MCF 10A (cell line): ENCODE measurements at regions of chr1 and their contacts with region 1.

Region 1: DNA sequence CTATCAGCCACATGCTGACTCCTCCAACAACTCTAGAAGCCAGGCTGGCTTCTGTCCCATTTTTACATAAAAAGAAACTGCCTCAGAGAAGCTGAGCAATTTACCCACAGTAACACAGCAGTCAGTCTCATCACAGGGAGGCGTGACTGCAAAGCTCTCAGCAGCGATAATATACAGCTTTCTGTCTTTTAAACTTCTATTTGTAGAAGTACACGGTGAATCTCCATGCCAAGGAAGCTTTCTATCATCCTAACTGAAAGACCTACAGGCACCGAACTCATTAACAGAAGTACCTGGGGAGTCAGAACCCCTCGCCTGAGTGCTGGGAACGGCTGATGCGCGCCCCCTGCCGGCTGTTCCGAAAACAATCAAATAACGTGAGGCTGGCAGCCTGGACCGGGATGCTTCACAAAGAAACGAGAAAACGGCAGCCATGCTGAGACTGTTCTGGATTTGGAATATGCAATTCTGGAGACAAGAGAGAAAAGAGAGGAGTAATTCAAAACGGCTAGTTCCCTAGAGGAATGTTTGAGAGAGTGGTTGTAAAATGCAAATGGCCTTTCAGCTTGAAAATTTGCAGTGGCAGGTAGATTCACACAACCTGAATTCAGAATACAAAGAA is 43.5 kb upstream of the RAB4A start:
- DNase-seq: peak; percentile 94
- H3K4me3 Mint-ChIP-seq: peak overlapping the region; percentile 5
- H3K27ac Mint-ChIP-seq: peak overlapping the region; percentile 1
- H3K4me1 Mint-ChIP-seq: peaks cover 66% of the 10 kb centered on the region
- H3K27me3 Mint-ChIP-seq: no peaks in the 10 kb centered on the region
- CTCF ChIP-seq: peak; percentile 99

Region 2: GRCh38 chr1:228691926-228692325 is 535.5 kb before region 1 on chr1:
- CTCF ChIA-PET with region 1: interaction called, 203 read pairs
- POLR2A ChIA-PET with region 1: interaction called, 24 read pairs
- intact Hi-C with region 1: loop called (anchors 1 kb)
- DNase-seq: peak; percentile 84
- H3K4me3 Mint-ChIP-seq: no peak overlapping the region
- H3K27ac Mint-ChIP-seq: no peak overlapping the region
- H3K4me1 Mint-ChIP-seq: peaks cover 18% of the 10 kb centered on the region
- H3K27me3 Mint-ChIP-seq: no peaks in the 10 kb centered on the region
- CTCF ChIP-seq: peak; percentile 85

Region 3: GRCh38 chr1:228837817-228838716 is 389.3 kb before region 1 on chr1:
- CTCF ChIA-PET with region 1: interaction called, 18 read pairs
- POLR2A ChIA-PET with region 1: interaction called, 38 read pairs
- intact Hi-C with region 1: loop called (anchors 10 kb)
- DNase-seq: peak; percentile 100
- H3K4me3 Mint-ChIP-seq: peak overlapping the region; percentile 4
- H3K27ac Mint-ChIP-seq: peak overlapping the region; percentile 78
- H3K4me1 Mint-ChIP-seq: peaks cover 50% of the 10 kb centered on the region
- H3K27me3 Mint-ChIP-seq: peaks cover 42% of the 10 kb centered on the region
- CTCF ChIP-seq: no peak

Region 4: DNA sequence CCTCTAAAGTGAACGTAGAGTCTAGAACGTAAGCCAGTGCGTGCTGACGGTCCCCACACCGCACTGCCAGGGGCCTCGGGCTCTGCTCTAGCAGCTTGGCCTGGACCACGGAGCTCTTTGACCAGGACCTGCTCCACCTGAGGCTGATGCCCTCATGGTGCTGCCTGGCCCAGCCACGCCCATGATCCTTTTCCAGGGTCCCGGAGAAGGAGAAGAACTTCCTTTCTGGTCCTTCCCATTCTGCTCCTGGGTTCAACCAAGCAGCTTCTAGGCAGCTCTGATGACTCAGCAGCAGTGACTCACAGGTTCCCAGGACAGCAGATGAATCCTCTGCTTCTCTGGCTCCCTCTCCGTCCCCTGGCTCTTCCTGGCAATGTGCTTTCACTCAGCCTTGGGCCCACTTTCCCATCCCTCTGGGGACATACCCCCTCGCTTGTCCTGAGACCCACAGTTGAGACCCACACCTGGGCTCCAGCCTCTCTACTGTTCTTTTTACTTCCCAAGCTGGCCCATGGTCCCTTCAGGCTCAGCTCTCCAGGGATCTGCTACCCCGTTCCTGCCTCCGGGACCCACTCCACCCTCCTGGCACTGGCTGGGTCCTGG is 202.8 kb before region 1 on chr1:
- CTCF ChIA-PET with region 1: interaction called, 19 read pairs
- POLR2A ChIA-PET with region 1: interaction called, 4 read pairs
- intact Hi-C with region 1: loop called (anchors 1 kb)
- DNase-seq: peak; percentile 98
- H3K4me3 Mint-ChIP-seq: no peak overlapping the region
- H3K27ac Mint-ChIP-seq: peak overlapping the region; percentile 21
- H3K4me1 Mint-ChIP-seq: peaks cover 25% of the 10 kb centered on the region
- H3K27me3 Mint-ChIP-seq: peaks cover 11% of the 10 kb centered on the region
- CTCF ChIP-seq: no peak

Region 5: GRCh38 chr1:229164836-229165735 is 62.3 kb before region 1 on chr1:
- CTCF ChIA-PET with region 1: interaction called, 30 read pairs
- POLR2A ChIA-PET with region 1: interaction called, 3 read pairs
- intact Hi-C with region 1: loop called (anchors 2 kb)
- DNase-seq: no peak
- H3K4me3 Mint-ChIP-seq: no peak overlapping the region
- H3K27ac Mint-ChIP-seq: no peak overlapping the region
- H3K4me1 Mint-ChIP-seq: no peaks in the 10 kb centered on the region
- H3K27me3 Mint-ChIP-seq: peaks cover 34% of the 10 kb centered on the region
- CTCF ChIP-seq: no peak

Region 6: GRCh38 chr1:229249854-229250644 is 22.6 kb after region 1 on chr1:
- CTCF ChIA-PET with region 1: interaction called, 201 read pairs
- POLR2A ChIA-PET with region 1: interaction called, 126 read pairs
- intact Hi-C with region 1: loop called (anchors 1 kb)
- DNase-seq: no peak
- H3K4me3 Mint-ChIP-seq: no peak overlapping the region
- H3K27ac Mint-ChIP-seq: peak overlapping the region; percentile 4
- H3K4me1 Mint-ChIP-seq: peaks cover 36% of the 10 kb centered on the region
- H3K27me3 Mint-ChIP-seq: no peaks in the 10 kb centered on the region
- CTCF ChIP-seq: no peak

Region 7: DNA sequence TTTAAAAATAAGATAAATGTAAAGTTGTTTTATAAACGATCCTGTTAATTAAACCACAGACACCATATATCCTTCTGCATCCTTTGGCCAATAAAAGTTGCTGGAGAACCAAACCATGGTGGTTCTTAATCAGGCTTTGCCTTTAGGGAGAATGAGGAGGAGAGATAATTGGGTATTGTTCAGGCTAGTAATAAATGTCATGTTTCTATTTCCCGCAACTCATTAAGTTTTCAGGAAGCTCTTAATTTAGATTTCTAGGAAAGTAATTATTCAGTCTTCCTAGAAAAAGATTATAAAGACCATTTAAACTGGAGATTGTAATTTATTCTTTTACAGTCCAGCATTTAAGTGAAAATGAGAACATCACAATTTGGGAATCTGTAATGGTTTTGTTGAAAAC is 78.0 kb after region 1 on chr1:
- CTCF ChIA-PET with region 1: no interaction called
- POLR2A ChIA-PET with region 1: no interaction called
- intact Hi-C with region 1: no loop called
- DNase-seq: no peak
- H3K4me3 Mint-ChIP-seq: no peak overlapping the region
- H3K27ac Mint-ChIP-seq: no peak overlapping the region
- H3K4me1 Mint-ChIP-seq: no peaks in the 10 kb centered on the region
- H3K27me3 Mint-ChIP-seq: no peaks in the 10 kb centered on the region
- CTCF ChIP-seq: no peak

Region 8: DNA sequence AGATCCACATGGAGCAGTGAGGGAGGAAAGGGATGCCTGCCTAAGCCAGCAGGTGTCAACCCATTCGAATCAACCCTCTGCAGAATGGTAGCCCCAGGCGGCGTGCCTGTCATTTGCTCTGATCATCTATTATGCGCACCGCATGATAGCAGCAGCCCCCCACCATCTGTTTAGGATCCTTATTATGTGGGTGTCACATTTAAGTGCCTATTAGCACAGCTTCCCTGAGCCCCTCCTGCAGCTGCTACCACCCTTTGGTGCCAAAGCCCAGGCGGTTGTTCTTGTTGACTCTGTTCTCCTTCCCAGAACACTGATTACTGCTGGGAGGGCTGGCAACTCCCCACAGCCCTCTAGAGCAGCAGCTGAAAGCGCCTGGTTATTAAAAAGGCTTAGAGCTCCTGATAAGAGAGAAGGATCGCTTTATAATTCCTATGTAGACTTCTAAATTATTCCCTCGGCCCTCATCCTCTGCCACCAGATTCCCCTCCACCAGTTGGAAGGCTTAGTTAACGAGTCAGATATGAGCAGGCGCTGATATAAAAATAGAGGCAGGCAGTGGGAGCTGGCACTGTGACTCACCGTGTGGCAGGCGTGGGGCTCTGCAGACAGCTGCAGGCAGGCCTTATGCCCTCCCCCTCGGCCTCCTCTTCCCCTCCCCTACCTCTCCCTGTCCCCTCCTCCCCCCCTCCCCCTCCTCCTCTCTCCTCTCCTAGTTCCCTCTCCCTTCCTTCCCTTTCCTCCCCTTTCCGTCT is 183.5 kb after region 1 on chr1:
- CTCF ChIA-PET with region 1: no interaction called
- POLR2A ChIA-PET with region 1: no interaction called
- intact Hi-C with region 1: no loop called
- DNase-seq: peak; percentile 74
- H3K4me3 Mint-ChIP-seq: no peak overlapping the region
- H3K27ac Mint-ChIP-seq: no peak overlapping the region
- H3K4me1 Mint-ChIP-seq: peaks cover 7% of the 10 kb centered on the region
- H3K27me3 Mint-ChIP-seq: peaks cover 33% of the 10 kb centered on the region
- CTCF ChIP-seq: no peak

Region 9: DNA sequence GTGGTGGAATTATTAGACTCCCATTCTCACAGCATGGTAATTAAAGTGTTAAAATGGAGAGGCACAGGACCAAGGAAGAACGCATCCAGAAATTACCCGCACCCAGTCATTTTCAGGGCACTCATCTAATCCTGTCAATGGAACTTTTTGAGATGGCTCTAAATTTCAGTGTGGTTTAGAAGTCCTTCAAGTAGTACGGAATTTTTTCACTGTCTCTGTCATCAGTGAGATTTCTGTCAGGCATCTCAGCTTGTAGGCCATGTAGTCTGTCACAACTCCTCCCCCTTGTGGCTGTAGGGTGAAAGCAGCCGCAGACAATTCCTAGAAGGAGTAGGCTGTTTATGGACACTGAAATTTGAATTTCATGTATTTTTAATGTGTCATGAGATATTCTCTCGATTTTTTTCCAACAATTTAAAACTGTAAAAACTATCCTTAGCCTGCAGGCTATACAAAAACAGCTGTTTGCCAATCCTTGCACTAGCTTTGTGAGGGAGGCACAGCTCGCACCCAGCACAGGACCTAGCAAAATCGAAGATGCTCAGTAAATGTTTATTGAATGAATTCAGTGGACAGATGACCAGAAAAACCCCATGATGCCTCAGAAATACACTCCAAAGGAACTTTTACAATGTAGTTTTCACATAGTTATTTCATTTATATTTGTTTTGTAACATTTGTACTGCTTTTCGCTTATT is 287.3 kb after region 1 on chr1:
- CTCF ChIA-PET with region 1: interaction called, 11 read pairs
- POLR2A ChIA-PET with region 1: interaction called, 3 read pairs
- intact Hi-C with region 1: no loop called
- DNase-seq: peak; percentile 90
- H3K4me3 Mint-ChIP-seq: no peak overlapping the region
- H3K27ac Mint-ChIP-seq: no peak overlapping the region
- H3K4me1 Mint-ChIP-seq: peaks cover 6% of the 10 kb centered on the region
- H3K27me3 Mint-ChIP-seq: no peaks in the 10 kb centered on the region
- CTCF ChIP-seq: peak; percentile 91

Region 10: GRCh38 chr1:230104395-230105244 is 877.2 kb after region 1 on chr1:
- CTCF ChIA-PET with region 1: no interaction called
- POLR2A ChIA-PET with region 1: no interaction called
- intact Hi-C with region 1: no loop called
- DNase-seq: peak; percentile 100
- H3K4me3 Mint-ChIP-seq: peak overlapping the region; percentile 61
- H3K27ac Mint-ChIP-seq: peak overlapping the region; percentile 65
- H3K4me1 Mint-ChIP-seq: peaks cover 67% of the 10 kb centered on the region
- H3K27me3 Mint-ChIP-seq: no peaks in the 10 kb centered on the region
- CTCF ChIP-seq: peak; percentile 4

Region 11: GRCh38 chr1:230917284-230918135 is 1690.1 kb after region 1 on chr1:
- CTCF ChIA-PET with region 1: no interaction called
- POLR2A ChIA-PET with region 1: no interaction called
- intact Hi-C with region 1: no loop called
- DNase-seq: peak; percentile 93
- H3K4me3 Mint-ChIP-seq: no peak overlapping the region
- H3K27ac Mint-ChIP-seq: no peak overlapping the region
- H3K4me1 Mint-ChIP-seq: peaks cover 6% of the 10 kb centered on the region
- H3K27me3 Mint-ChIP-seq: no peaks in the 10 kb centered on the region
- CTCF ChIP-seq: peak; percentile 96